ENCODE measurements at regions of chr9 and their contacts with region 1.

Region 1: GRCh38 chr9:112443200-112443599 is 43.4 kb upstream of the KIAA1958 start:
- DNase-seq: peak; percentile 7
- H3K4me3 Mint-ChIP-seq: no peak overlapping the region
- H3K27ac Mint-ChIP-seq: no peak overlapping the region
- H3K4me1 Mint-ChIP-seq: peaks cover 11% of the 10 kb centered on the region
- H3K27me3 Mint-ChIP-seq: no peaks in the 10 kb centered on the region

Region 2: GRCh38 chr9:112315331-112316257 is 127.6 kb before region 1 on chr9:
- intact Hi-C with region 1: no loop called
- DNase-seq: no peak
- H3K4me3 Mint-ChIP-seq: peak overlapping the region; percentile 46
- H3K27ac Mint-ChIP-seq: peak overlapping the region; percentile 79
- H3K4me1 Mint-ChIP-seq: peaks cover 52% of the 10 kb centered on the region
- H3K27me3 Mint-ChIP-seq: peaks cover 1% of the 10 kb centered on the region

Region 3: DNA sequence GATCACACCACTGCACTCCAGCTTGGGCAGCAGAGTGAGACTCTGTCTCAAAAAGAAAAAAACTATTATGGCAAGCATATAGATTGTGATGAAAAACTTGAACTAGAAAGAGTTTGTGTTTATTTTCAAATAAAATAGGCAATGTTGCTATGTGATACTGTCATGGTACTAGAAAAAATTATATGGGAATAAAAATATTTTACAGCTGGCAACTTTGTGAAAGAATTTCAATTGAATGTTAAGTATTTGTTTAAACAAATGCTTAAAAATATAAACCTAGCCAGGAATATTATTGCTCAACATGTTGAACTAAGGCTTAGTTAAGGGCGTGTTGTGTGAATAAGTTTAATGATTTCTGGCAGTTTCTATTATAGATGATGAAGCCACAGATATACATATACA is 31.6 kb before region 1 on chr9:
- intact Hi-C with region 1: no loop called
- DNase-seq: no peak
- H3K4me3 Mint-ChIP-seq: no peak overlapping the region
- H3K27ac Mint-ChIP-seq: no peak overlapping the region
- H3K4me1 Mint-ChIP-seq: no peaks in the 10 kb centered on the region
- H3K27me3 Mint-ChIP-seq: no peaks in the 10 kb centered on the region

Region 4: DNA sequence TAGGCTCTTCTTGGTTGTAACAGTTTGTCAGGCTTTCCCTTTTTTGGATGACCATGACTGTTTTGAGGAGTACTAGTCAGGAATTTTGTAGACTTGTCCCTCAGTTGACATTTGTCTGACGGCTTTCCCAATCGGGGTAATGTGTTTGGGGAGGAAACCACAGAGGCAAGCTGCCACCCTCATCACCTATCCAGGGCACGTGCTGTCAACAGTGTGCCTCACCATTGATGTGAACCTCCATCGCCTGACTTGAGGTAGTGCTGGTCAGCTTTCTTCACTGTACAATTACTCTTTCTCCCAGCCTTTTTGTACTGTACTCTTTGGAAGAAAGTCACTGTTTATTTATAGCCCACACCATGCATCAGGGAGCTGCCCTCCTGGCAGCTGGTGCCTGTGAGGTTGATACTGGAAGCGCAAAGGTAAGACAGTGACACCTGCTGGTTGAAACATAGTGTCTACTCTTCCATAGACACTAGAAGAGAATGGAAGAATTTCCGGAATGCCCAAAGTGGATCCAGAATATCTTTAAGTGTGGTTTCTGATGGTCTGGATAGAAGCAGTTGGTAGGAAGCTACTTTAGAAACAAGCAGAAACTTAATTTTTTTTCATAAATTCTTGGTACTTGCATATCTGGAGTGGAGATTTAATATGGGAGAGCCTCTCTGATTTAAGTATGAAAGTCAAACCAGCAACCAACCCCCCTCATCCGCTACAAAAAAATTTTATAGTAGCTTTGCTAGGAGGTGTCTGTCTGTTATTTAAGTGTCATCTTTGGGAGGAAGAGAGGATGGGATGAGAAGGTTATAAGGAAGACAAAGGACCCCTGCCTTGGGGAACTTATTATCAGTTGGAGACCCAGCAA is 376.7 kb after region 1 on chr9:
- intact Hi-C with region 1: loop called (anchors 5 kb)
- DNase-seq: no peak
- H3K4me3 Mint-ChIP-seq: no peak overlapping the region
- H3K27ac Mint-ChIP-seq: no peak overlapping the region
- H3K4me1 Mint-ChIP-seq: no peaks in the 10 kb centered on the region
- H3K27me3 Mint-ChIP-seq: peaks cover 3% of the 10 kb centered on the region